Caco-2 (cell line): ENCODE measurements at regions of chr19 and their contacts with region 1.

Region 1: DNA sequence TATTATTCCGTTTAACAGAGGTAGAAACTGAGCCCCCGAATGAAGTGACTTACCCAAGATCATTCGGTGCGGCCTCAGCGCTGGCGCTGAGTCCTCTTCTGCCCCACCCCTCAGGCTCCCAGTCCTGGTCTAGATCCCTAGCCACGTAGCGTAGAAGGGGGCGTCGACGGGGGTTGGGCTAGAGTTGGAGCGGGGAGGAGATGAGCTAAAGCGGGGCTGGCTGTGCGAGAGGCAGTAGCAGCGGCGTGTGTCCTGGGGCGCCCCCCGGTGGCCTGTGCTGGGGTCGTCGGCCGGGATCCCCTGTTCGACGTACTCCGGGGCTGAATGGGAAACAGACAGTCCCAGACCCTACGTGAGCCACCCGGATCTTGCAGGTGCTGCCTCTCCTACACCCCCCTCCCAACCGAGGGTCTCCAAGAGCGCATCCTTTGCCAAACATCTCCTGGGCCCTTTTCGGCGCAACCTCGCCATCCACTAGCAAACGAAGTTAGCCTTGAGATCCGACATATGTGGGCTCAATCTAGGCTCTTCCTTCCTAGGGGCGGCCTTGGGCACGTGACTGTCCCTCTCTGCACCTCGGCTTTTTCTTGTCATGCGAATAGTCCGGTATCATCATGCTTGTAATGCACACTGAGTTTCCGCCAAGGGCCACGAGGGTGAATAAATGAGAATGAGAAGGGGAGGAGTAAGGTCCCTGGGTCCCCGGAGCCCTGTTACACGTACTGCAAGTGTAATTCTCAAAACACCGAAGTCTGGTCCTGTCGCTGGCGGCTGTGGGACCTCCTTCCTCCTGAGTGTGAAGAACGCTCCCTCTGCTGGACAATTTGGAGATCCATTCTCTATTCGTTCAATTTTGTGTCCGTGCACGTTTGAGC is 47.7 kb downstream of the CYP4F22 start:
- DNase-seq: peak; percentile 96
- H3K4me3 ChIP-seq: peak overlapping the region; percentile 39
- H3K4me3 Mint-ChIP-seq: peak overlapping the region; percentile 85
- H3K27ac Mint-ChIP-seq: peak overlapping the region; percentile 84
- H3K4me1 ChIP-seq: no peaks in the 10 kb centered on the region; the same call in 1 of the 2 replicates
- H3K4me1 Mint-ChIP-seq: peaks cover 14% of the 10 kb centered on the region
- H3K27me3 ChIP-seq: no peaks in the 10 kb centered on the region
- H3K27me3 Mint-ChIP-seq: no peaks in the 10 kb centered on the region
- CTCF ChIP-seq: peak; percentile 68 to 79

Region 2: DNA sequence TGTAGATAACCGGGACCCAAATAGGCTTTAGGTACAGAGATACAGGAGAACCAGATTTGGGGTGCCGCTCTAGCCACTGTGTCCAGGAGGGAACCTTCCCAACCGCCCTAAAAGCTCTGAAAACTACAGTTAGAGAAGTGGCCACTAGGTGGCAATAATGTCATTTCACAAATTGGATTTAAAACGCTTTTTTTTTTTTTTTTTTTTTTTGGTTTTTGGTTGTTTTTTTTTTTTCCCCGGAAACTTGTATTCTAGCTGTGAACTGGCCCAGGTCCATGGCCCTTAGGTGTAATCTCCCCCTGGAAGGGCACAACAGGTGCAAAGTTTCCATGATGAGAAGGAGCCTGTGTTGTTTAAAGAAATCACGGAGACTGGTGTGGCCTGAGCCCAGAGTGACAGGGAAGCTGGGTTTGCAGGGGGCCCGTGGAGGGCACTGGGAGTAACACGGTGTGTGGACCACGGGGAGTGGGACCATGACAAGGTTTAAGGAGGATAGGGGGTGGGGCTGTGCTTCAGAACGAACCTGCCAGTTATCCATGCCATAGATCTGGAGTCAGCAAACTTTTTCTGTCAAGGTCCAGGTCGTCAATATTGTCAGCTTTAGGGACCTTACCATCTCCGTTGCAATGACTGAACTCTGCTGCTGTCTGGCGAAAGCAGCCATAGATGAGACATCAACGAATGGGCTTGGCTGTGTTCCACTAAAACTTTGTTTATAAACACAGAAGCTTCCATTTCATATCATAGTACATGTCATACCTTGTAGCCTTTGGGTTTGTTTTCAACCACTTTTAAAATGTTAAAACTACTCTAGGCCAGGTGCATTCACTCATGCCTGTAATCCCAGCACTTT is 463.9 kb before region 1 on chr19:
- CTCF ChIA-PET with region 1: interaction called, 11 read pairs
- POLR2A ChIA-PET with region 1: no interaction called
- intact Hi-C with region 1: loop called (anchors 1 kb)
- DNase-seq: peak in 1 of 2 experiments; percentile 63
- H3K4me3 ChIP-seq: no peak overlapping the region
- H3K4me3 Mint-ChIP-seq: no peak overlapping the region
- H3K27ac Mint-ChIP-seq: no peak overlapping the region
- H3K4me1 ChIP-seq: no peaks in the 10 kb centered on the region
- H3K4me1 Mint-ChIP-seq: no peaks in the 10 kb centered on the region
- H3K27me3 ChIP-seq: no peaks in the 10 kb centered on the region
- H3K27me3 Mint-ChIP-seq: peaks cover 12% of the 10 kb centered on the region
- CTCF ChIP-seq: peak; percentile 30 to 60

Region 3: DNA sequence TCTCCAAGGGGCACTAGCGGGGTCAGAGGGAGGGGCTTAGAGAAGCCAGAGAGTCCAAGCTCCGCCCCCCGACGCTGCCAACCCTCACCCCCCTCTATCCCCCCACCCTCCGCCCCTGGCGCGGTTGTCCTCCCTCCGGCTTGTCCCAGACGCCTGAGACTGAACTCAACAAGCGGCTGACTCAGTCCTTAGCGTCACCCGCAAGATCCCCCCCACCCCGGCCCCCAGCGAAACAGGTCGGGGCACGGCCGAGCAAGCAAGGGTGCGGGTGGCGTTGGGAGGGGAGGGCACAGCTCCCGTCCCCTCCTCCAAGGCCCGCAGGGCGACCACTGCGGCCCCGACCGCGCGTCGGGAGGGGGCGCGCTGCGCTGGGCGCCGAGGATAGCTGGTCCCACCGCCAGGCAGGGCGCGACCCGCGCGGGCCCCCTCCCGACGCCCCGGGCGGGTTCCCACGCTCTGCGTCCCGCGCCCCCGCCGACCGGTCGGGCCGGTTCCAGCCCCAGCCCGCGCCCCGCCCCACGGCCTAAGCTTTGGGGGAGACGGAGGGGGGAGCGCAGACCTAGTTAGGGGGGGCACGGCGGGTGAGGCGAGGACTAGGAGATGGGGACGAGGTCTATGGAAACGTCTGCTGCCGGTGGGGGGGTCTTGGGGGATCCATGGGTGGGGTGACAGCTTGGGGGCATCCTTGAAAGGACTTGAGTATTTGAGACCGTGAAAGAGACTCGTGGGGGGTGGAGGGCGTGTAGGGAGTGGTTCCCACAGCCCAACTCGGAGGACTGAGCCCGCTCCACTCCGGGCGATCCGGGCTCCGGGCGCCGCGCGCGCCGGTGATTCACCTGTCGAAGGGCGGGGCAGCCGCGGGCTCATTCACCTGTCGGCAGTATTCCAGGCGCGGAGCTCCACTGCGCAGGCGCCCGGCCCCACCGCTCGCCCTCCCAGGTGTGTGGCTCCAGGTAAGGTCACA is 360.3 kb before region 1 on chr19:
- CTCF ChIA-PET with region 1: interaction called, 11 read pairs
- POLR2A ChIA-PET with region 1: no interaction called
- intact Hi-C with region 1: no loop called
- DNase-seq: peak; percentile 95 to 98
- H3K4me3 ChIP-seq: peak overlapping the region; percentile 53
- H3K4me3 Mint-ChIP-seq: peak overlapping the region; percentile 69
- H3K27ac Mint-ChIP-seq: peak overlapping the region; percentile 56
- H3K4me1 ChIP-seq: 0 out of 2 replicates have a peak, but pooled peaks cover 6% of the 10 kb centered on the region
- H3K4me1 Mint-ChIP-seq: peaks cover 16% of the 10 kb centered on the region
- H3K27me3 ChIP-seq: no peaks in the 10 kb centered on the region
- H3K27me3 Mint-ChIP-seq: no peaks in the 10 kb centered on the region
- CTCF ChIP-seq: peak; percentile 23 to 47

Region 4: DNA sequence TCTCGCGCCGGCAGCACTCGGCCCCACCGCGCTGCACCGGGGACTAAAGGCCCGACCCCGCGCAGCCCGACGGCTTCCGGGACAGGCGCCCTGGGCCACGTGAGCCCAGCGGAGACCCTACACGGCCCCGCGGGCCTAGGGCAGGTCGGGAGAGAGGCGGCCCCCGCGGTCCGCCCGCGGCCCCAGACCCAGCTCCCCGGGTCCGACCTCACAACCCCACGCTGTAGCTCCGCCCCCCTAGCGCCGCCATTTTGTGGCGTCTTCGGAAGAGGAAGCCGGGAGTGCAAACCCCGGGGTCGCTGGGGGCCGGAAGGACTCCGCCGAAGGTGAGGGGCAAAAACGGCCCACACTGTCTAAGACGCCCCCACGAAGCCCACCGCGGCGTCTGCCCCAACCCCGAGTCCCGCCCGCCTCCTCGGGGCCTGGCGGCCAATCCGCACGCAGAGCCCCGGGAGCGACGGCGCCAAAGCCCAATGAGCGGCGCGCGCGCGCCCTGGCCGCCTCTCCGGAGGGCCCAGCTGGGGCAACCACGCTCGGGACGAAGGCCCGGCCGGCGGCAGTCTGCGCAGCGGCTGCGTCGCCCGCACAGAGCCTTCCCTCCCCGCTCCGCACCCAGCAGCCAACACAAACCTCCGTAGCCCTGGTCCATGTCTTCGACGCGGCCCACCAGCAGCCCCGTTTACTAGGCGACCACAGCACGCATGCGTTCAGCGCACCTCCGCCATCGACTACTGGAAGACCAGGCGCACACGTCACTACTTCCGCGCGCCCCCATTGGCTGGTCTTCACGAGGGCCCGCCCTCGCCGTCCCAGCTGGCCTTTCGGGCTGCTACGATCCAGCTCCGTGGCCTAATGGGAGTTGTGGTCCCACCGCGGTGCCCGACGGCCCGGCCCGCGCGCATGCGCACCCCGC is 176.7 kb before region 1 on chr19 and contains the start of gene AKAP8:
- CTCF ChIA-PET with region 1: interaction called, 19 read pairs
- POLR2A ChIA-PET with region 1: interaction called, 3 read pairs
- intact Hi-C with region 1: loop called (anchors 5 kb)
- DNase-seq: peak; percentile 97 to 98
- H3K4me3 ChIP-seq: peak within 1 kb of the TSS; percentile 98
- H3K4me3 Mint-ChIP-seq: peak within 1 kb of the TSS; percentile 86
- H3K27ac Mint-ChIP-seq: peak within 1 kb of the TSS; percentile 100
- H3K4me1 ChIP-seq: peaks cover 18% of the 10 kb centered on the region
- H3K4me1 Mint-ChIP-seq: peaks cover 16% of the 10 kb centered on the region
- H3K27me3 ChIP-seq: no peaks in the 10 kb centered on the region
- H3K27me3 Mint-ChIP-seq: no peaks in the 10 kb centered on the region
- CTCF ChIP-seq: no peak
- total RNA-seq, gene AKAP8: 53.5 and 53.7 TPM in 2 replicates

Region 5: DNA sequence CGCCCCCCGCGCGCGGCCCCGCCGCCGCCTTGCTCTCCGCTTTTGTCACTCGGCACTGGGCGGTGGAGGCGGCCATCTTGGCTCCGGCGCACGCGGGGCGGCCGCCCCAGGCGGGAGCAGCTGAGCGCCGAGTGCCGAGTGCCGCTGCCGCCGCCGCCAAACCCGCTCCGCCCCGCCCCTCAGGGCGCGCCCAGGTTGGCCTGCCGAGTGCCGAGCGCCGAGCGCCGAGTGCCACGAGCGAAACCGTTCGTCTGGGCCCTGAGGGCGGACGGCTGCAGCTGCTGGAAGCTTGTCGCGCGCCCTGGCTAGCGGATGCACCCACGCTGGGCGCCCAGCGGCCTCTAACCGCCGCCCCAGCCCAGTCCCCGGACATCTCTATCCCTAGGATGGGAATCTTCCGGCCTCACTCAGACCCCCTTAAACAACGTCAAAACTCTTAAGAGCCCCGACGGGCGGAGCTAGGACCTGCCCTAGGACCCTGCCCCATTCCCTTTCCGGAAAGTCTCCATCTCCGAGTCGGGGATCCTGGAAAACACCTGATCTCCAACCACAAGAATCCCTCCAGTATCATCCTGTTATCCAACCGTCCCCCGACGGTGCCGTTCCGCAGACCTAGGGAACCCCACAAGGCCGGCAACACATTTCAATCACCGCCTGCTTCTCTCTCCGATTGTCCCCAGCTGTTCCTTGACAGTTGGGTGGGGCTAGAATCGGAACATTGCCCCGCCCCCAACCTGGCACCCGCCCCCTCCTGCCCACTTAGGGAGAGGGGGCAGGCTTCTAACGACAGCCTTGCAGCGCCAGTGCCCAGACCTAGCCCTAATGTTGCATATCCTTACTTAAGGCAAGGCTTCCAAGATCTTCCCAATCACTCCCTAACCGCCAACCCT is 123.1 kb before region 1 on chr19:
- CTCF ChIA-PET with region 1: interaction called, 4 read pairs
- POLR2A ChIA-PET with region 1: no interaction called
- intact Hi-C with region 1: loop called (anchors 5 kb)
- DNase-seq: peak; percentile 90 to 94
- H3K4me3 ChIP-seq: peak overlapping the region; percentile 94
- H3K4me3 Mint-ChIP-seq: peak overlapping the region; percentile 98
- H3K27ac Mint-ChIP-seq: peak overlapping the region; percentile 88
- H3K4me1 ChIP-seq: peaks cover 14% of the 10 kb centered on the region
- H3K4me1 Mint-ChIP-seq: peaks cover 22% of the 10 kb centered on the region
- H3K27me3 ChIP-seq: no peaks in the 10 kb centered on the region
- H3K27me3 Mint-ChIP-seq: no peaks in the 10 kb centered on the region
- CTCF ChIP-seq: no peak

Region 6: GRCh38 chr19:15532779-15533521 is 23.0 kb before region 1 on chr19:
- CTCF ChIA-PET with region 1: no interaction called
- POLR2A ChIA-PET with region 1: no interaction called
- intact Hi-C with region 1: no loop called
- DNase-seq: no peak
- H3K4me3 ChIP-seq: no peak overlapping the region
- H3K4me3 Mint-ChIP-seq: no peak overlapping the region
- H3K27ac Mint-ChIP-seq: no peak overlapping the region
- H3K4me1 ChIP-seq: no peaks in the 10 kb centered on the region
- H3K4me1 Mint-ChIP-seq: no peaks in the 10 kb centered on the region
- H3K27me3 ChIP-seq: no peaks in the 10 kb centered on the region
- H3K27me3 Mint-ChIP-seq: peaks cover 14% of the 10 kb centered on the region
- CTCF ChIP-seq: no peak